Transverse colon (tissue), 4 donors: ENCODE measurements at regions of chr1 and their contacts with region 1.

Region 1: DNA sequence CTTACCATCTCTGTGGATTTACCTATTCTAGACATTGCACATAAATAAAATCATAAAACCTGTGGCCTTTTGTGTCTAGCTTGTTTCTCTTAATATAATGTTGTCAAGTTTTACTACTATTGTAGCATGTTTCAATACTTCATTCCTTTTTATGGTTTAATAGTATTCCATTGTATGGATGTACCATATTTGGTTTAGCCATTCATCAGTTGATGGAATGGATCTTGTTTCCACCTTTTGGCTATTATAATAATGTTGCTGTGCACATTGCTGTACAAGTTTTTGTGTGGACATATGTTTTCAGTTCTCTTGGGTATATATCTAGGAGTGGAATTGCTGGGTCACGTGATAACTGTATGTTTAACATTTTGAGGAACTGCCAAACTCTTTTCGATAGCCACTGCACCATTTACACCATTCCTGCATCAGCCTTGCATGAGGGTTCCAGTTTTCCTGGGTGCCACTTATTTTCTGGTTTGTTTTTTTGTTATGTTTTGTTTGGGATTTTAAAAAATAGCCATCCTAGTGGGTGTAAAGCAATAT is 66.9 kb downstream of the RNF220 start:
- DNase-seq: no peak
- H3K4me3 ChIP-seq: no peak overlapping the region
- H3K27ac ChIP-seq: no peak overlapping the region
- H3K4me1 ChIP-seq: peaks cover 0 to 10% (median 4%) of the 10 kb centered on the region in 4 donors
- H3K27me3 ChIP-seq: no peaks in the 10 kb centered on the region
- CTCF ChIP-seq: no peak
- EP300 ChIP-seq: no peak
- POLR2A ChIP-seq: no peak

Region 2: GRCh38 chr1:43582162-43582589 is 889.8 kb before region 1 on chr1:
- in situ Hi-C with region 1: no loop called
- intact Hi-C with region 1: no loop called
- DNase-seq: peak; percentile 71
- H3K4me3 ChIP-seq: no peak overlapping the region
- H3K27ac ChIP-seq: peak overlapping the region; percentile 35 to 74 (median 64)
- H3K4me1 ChIP-seq: peaks cover 5 to 33% (median 19%) of the 10 kb centered on the region in 4 donors
- H3K27me3 ChIP-seq: no peaks in the 10 kb centered on the region
- CTCF ChIP-seq: no peak
- EP300 ChIP-seq: no peak
- POLR2A ChIP-seq: no peak

Region 3: DNA sequence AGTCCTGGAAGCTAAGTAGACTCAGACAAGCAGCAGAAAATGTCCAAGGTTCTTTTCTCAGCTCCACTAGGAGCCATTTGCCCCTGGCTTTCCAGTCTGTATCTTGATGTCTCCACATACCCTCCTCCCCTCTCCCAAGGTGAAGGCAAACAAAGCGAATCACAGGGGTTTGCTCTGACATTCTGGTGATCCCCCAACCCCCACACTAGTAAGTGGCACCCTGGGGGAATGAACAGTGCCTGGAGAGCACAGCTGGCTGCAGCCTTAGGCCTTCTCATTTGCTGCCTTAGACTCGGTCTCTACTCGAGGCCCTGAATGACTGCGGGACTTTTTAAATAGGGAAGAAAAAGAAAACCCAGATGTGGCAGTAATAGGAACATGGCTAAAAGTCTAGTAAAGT is 132.3 kb before region 1 on chr1:
- in situ Hi-C with region 1: no loop called
- intact Hi-C with region 1: no loop called
- DNase-seq: no peak
- H3K4me3 ChIP-seq: no peak overlapping the region
- H3K27ac ChIP-seq: no peak overlapping the region
- H3K4me1 ChIP-seq: no peaks in the 10 kb centered on the region
- H3K27me3 ChIP-seq: no peaks in the 10 kb centered on the region
- CTCF ChIP-seq: no peak
- EP300 ChIP-seq: no peak
- POLR2A ChIP-seq: no peak

Region 4: GRCh38 chr1:44436401-44437106 is 35.4 kb before region 1 on chr1:
- in situ Hi-C with region 1: no loop called
- intact Hi-C with region 1: loop called (anchors 1 kb)
- DNase-seq: no peak
- H3K4me3 ChIP-seq: no peak overlapping the region
- H3K27ac ChIP-seq: no peak overlapping the region
- H3K4me1 ChIP-seq: no peaks in the 10 kb centered on the region
- H3K27me3 ChIP-seq: peaks cover 9% of the 10 kb centered on the region
- CTCF ChIP-seq: no peak
- EP300 ChIP-seq: no peak
- POLR2A ChIP-seq: no peak

Region 5: GRCh38 chr1:44523593-44524591 is 51.9 kb after region 1 on chr1:
- in situ Hi-C with region 1: no loop called
- intact Hi-C with region 1: loop called (anchors 1 kb)
- DNase-seq: no peak
- H3K4me3 ChIP-seq: no peak overlapping the region
- H3K27ac ChIP-seq: no peak overlapping the region
- H3K4me1 ChIP-seq: no peaks in the 10 kb centered on the region
- H3K27me3 ChIP-seq: peaks cover 28% of the 10 kb centered on the region
- CTCF ChIP-seq: no peak
- EP300 ChIP-seq: no peak
- POLR2A ChIP-seq: no peak